ENCODE measurements at regions of chr5 and their contacts with region 1.

Region 1: GRCh38 chr5:177497292-177498033 is at the start of gene PDLIM7:
- DNase-seq: peak; percentile 97
- ATAC-seq: peak; percentile 83
- H3K4me3 Mint-ChIP-seq: peak within 1 kb of the TSS; percentile 80
- H3K27ac Mint-ChIP-seq: peak within 1 kb of the TSS; percentile 39
- H3K4me1 Mint-ChIP-seq: peaks cover 79% of the 10 kb centered on the region
- H3K27me3 Mint-ChIP-seq: peaks cover 2% of the 10 kb centered on the region
- CTCF ChIP-seq: no peak
- total RNA-seq, gene PDLIM7: 17.0 and 17.7 TPM in 2 replicates

Region 2: GRCh38 chr5:177071666-177072385 is 425.6 kb before region 1 on chr5:
- CTCF ChIA-PET with region 1: no interaction called
- POLR2A ChIA-PET with region 1: no interaction called
- intact Hi-C with region 1: no loop called
- DNase-seq: peak; percentile 55
- ATAC-seq: peak; percentile 89
- H3K4me3 Mint-ChIP-seq: peak overlapping the region; percentile 61
- H3K27ac Mint-ChIP-seq: peak overlapping the region; percentile 82
- H3K4me1 Mint-ChIP-seq: peaks cover 35% of the 10 kb centered on the region
- H3K27me3 Mint-ChIP-seq: no peaks in the 10 kb centered on the region
- CTCF ChIP-seq: peak; percentile 85

Region 3: GRCh38 chr5:177162379-177162778 is 335.1 kb before region 1 on chr5:
- CTCF ChIA-PET with region 1: no interaction called
- POLR2A ChIA-PET with region 1: no interaction called
- intact Hi-C with region 1: no loop called
- DNase-seq: no peak
- ATAC-seq: no peak
- H3K4me3 Mint-ChIP-seq: no peak overlapping the region
- H3K27ac Mint-ChIP-seq: no peak overlapping the region
- H3K4me1 Mint-ChIP-seq: peaks cover 35% of the 10 kb centered on the region
- H3K27me3 Mint-ChIP-seq: no peaks in the 10 kb centered on the region
- CTCF ChIP-seq: no peak

Region 4: GRCh38 chr5:177311723-177312648 is 185.5 kb before region 1 on chr5 and contains the start of gene MXD3:
- CTCF ChIA-PET with region 1: interaction called, 5 read pairs
- POLR2A ChIA-PET with region 1: no interaction called
- intact Hi-C with region 1: loop called (anchors 1 kb)
- DNase-seq: peak; percentile 89
- ATAC-seq: peak; percentile 90
- H3K4me3 Mint-ChIP-seq: peak within 1 kb of the TSS; percentile 80
- H3K27ac Mint-ChIP-seq: peak within 1 kb of the TSS; percentile 47
- H3K4me1 Mint-ChIP-seq: peaks cover 38% of the 10 kb centered on the region
- H3K27me3 Mint-ChIP-seq: no peaks in the 10 kb centered on the region
- CTCF ChIP-seq: no peak
- total RNA-seq, gene MXD3: 7.6 and 9.1 TPM in 2 replicates

Region 5: DNA sequence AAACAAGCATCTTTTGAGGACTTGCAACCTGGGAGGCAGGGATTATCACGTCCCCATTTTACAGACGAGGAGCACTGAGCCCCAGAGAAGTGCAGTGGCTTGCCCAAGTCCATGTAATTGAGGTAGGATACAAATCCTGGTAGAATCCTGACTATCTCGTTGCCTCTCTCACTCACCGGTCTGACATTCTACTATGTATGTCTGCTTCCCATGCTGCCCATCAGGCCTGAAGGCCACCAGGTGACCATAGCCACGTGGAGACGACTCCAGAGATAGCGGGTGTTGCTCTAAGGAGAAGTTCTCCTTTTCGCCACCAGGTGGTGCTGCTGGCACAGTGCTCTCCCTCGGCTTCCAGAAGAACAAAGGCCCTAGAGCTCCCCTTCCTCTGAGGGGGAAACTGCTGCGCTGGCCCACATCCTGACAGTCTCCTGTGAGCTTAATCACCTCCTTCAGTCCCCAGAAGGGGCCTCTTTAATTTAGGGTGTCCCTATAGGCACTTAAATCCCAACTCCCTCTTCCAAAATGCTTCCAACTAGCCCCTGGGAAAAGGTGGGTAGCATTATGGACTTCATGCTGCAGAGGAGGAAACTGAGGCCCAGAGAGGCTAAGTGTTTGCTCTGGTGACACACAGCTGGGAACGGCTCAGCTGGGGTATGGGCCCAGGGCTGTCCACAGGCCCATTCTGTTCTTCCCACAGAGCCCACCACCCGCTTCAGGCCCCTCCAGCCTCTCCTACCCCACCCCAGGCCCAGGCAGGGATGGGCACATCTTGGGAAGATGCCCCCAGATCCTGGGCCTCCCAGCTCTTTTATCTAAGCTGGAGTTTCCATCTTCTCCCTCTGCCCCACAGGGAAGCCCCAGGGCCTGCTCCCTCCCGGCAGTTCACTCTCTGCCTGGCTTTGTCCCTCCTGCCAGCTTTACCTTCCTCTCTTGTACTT is 106.8 kb before region 1 on chr5:
- CTCF ChIA-PET with region 1: interaction called, 36 read pairs
- POLR2A ChIA-PET with region 1: interaction called, 3 read pairs
- intact Hi-C with region 1: loop called (anchors 1 kb)
- DNase-seq: peak; percentile 71
- ATAC-seq: peak; percentile 93
- H3K4me3 Mint-ChIP-seq: no peak overlapping the region
- H3K27ac Mint-ChIP-seq: no peak overlapping the region
- H3K4me1 Mint-ChIP-seq: peaks cover 29% of the 10 kb centered on the region
- H3K27me3 Mint-ChIP-seq: peaks cover 1% of the 10 kb centered on the region
- CTCF ChIP-seq: peak; percentile 29

Region 6: GRCh38 chr5:177465044-177465443 is 32.4 kb before region 1 on chr5:
- CTCF ChIA-PET with region 1: no interaction called
- POLR2A ChIA-PET with region 1: no interaction called
- intact Hi-C with region 1: no loop called
- DNase-seq: no peak
- ATAC-seq: no peak
- H3K4me3 Mint-ChIP-seq: no peak overlapping the region
- H3K27ac Mint-ChIP-seq: no peak overlapping the region
- H3K4me1 Mint-ChIP-seq: peaks cover 2% of the 10 kb centered on the region
- H3K27me3 Mint-ChIP-seq: no peaks in the 10 kb centered on the region
- CTCF ChIP-seq: no peak

Region 7: DNA sequence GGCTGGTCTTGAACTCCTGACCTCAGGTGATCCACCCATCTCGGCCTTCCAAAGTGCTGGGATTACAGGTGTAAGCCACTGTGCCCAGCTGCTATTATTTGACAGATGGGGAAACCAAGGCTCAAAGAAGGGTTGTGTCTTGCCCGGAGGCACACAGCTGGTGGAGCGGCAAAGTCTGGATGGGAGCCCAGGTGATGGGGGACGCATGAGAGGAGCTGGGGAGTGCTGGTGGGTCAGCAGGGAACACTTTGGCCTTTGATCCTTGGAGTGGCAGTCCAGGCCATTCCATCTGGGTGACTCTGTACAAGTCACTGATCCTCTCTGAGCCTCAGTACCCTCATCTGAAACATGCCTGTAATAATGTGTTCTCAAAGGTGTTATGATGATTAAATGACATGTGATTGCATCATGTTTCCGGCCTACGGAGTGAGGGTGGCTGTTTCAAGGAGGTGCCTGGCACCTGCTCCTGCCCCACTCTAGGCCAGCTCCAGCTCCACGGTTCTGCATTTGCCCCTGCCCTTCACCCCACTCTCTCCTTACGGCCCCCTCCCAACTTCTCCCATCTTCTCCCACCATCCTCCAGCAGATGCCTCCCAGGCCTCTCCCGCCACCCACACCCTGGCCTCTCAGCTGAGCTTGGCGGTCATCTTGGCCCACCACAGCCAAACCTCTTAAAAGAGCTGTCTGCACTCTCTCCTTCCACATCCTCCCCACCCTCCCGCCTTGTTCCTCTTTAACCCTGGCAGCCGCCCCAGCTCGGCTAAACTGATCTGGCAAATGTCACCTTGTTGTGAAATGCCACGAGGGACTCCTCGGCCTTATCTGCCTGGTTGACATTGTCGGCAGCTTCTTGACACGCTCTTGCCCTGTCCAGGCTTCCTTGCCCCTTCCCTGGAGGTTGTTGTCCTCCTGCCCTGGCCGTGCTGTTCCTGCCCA is 18.5 kb before region 1 on chr5:
- CTCF ChIA-PET with region 1: interaction called, 10 read pairs
- POLR2A ChIA-PET with region 1: interaction called, 3 read pairs
- intact Hi-C with region 1: loop called (anchors 2 kb)
- DNase-seq: no peak
- ATAC-seq: peak; percentile 73
- H3K4me3 Mint-ChIP-seq: peak overlapping the region; percentile 59
- H3K27ac Mint-ChIP-seq: peak overlapping the region; percentile 88
- H3K4me1 Mint-ChIP-seq: peaks cover 33% of the 10 kb centered on the region
- H3K27me3 Mint-ChIP-seq: peaks cover 3% of the 10 kb centered on the region
- CTCF ChIP-seq: no peak

Region 8: GRCh38 chr5:177516604-177517568 is 19.4 kb after region 1 on chr5 and contains the start of gene DDX41:
- CTCF ChIA-PET with region 1: interaction called, 21 read pairs
- POLR2A ChIA-PET with region 1: no interaction called
- intact Hi-C with region 1: loop called (anchors 2 kb)
- DNase-seq: peak; percentile 93
- ATAC-seq: peak; percentile 92
- H3K4me3 Mint-ChIP-seq: peak within 1 kb of the TSS; percentile 98
- H3K27ac Mint-ChIP-seq: peak within 1 kb of the TSS; percentile 94
- H3K4me1 Mint-ChIP-seq: peaks cover 50% of the 10 kb centered on the region
- H3K27me3 Mint-ChIP-seq: no peaks in the 10 kb centered on the region
- CTCF ChIP-seq: no peak
- total RNA-seq, gene DDX41: 128 and 144 TPM in 2 replicates

Region 9: DNA sequence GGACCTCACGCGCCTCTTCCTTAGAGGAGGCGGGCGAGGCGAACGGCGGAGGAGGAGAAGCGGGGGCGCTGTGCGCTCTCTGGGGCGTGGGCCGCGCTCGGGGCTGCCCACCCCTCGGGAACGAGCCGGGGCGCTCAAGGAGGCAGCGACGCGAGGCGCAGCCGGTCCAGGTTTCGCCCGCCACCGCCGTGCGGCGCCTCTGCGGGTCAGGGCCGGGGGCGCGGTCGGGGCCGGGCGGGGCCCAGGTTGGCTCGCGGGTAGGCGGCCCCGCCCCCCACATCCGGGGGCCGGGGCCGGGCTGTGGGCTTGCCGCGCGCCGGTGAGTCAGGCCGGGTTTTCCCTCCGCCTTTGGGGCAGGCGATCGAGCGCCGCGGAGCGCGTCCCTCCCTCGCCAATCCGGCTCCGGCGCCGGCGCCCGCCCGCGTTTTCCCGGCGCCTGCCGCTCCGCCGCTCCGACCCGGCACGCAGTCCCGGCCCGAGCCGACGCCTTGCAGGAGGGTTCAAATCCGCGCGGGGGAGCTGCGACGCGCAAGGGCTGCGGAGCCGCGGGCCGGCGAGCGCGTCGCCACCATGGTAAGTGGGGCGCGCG is 615.8 kb after region 1 on chr5 and contains the start of gene N4BP3:
- CTCF ChIA-PET with region 1: no interaction called
- POLR2A ChIA-PET with region 1: interaction called, 11 read pairs
- intact Hi-C with region 1: no loop called
- DNase-seq: peak; percentile 92
- ATAC-seq: peak; percentile 70
- H3K4me3 Mint-ChIP-seq: peak within 1 kb of the TSS; percentile 98
- H3K27ac Mint-ChIP-seq: peak within 1 kb of the TSS; percentile 94
- H3K4me1 Mint-ChIP-seq: peaks cover 65% of the 10 kb centered on the region
- H3K27me3 Mint-ChIP-seq: no peaks in the 10 kb centered on the region
- CTCF ChIP-seq: no peak
- total RNA-seq, gene N4BP3: 17.4 and 18.1 TPM in 2 replicates